Sciatic nerve (tissue), 2 donors: ENCODE measurements at regions of chr5 and their contacts with region 1.

Region 1: GRCh38 chr5:64144425-64145215 is 21.0 kb upstream of the RNF180 start:
- DNase-seq: no peak
- ATAC-seq: no peak

Region 2: DNA sequence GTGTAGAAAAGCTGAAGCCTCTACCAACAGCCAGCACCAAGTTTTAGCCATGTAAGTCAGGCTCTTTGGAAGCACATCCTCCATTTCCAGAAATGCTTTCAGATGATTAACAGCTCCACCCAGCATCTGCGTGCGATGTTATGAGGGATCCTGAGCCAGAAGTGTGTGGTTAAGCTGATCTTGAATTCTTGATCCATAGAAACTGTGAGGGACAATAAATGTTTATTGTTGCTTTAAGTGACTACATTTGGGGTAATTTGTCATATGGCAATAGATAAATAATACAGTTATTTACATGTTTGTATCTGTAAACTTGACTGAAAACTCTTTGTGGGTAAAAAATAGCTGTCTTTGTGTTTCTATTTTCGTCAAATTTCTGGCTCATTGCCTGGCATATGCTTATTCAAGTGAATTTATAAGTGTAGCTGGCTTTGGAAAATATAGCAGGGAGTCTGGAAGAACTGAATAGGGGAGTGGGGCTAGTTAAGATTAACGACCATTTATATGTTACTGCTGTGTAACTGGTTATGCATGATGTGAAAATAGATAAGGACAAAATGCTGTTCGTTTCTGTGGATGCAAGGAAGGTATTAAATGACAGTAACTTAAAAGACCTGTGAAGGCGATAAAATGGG is 1331.9 kb before region 1 on chr5:
- intact Hi-C with region 1: loop called (anchors 5 kb)
- DNase-seq: no peak
- ATAC-seq: no peak

Region 3: GRCh38 chr5:64000096-64000495 is 144.5 kb before region 1 on chr5:
- intact Hi-C with region 1: no loop called
- DNase-seq: no peak
- ATAC-seq: no peak

Region 4: DNA sequence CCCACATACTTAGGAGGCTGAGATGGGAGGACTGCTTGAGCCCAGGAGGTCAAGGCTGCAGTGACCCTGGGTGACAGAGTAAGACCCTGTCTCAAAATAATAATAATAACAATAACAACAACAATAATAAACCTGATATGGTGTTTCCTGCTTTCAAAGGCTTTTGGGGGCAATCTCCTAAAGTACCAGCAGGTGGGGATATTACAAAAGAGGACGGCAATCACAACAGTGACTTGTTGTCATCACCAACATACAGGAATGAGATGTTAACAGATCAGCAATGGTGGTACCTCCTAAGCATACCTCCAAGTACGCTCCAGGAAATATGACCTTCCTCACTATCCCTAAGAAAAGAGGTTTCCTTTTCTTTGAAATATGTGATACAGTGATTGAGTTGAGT is 70.1 kb before region 1 on chr5:
- intact Hi-C with region 1: no loop called
- DNase-seq: no peak
- ATAC-seq: no peak

Region 5: DNA sequence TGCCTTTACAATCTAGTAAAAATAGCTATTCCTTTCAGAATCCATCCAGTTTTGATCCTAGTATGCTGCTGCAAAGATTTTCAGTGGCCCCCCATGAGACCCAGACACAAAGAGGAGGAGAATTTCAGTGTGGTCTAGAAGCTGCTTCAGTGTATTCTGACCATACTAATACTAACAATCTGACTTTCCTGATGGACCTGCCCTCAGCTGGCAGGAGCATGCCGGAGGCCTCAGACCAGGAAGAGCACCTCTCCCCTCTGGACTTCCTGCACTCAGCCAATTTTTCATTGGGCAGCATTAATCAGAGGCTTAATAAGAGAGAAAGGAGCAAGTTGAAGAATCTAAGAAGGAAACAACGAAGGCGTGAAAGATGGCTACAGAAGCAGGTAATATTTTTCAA is 69.5 kb after region 1 on chr5:
- intact Hi-C with region 1: no loop called
- DNase-seq: no peak
- ATAC-seq: no peak